Left colon (tissue), 2 donors: ENCODE measurements at regions of chr12 and their contacts with region 1.

Region 1: DNA sequence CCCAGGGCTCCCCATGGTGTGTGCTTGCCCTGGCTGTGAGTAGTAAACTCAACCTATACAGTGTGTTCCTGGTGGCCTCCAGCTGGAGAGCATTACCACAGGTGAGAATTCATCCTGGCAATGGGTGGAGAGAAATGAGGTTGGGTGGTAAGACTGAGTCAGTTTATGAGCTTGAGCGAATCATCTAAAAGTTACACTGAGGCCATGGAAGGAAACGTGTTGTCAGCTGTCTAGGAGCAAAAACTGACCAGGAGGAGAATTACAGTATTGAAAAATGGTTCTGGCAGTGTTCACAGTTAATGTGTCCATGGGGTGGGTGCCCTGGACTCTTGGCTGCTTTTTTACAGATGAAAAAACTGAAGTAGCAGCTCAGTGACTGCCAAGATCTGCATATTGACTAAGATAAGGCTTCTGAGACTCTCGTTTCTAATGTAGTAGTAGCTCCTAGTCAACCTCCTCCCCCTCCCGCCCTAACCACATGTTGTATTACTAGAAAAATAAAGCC is 202.0 kb upstream of the AMIGO2 start:
- DNase-seq: no peak
- ATAC-seq: no peak

Region 2: DNA sequence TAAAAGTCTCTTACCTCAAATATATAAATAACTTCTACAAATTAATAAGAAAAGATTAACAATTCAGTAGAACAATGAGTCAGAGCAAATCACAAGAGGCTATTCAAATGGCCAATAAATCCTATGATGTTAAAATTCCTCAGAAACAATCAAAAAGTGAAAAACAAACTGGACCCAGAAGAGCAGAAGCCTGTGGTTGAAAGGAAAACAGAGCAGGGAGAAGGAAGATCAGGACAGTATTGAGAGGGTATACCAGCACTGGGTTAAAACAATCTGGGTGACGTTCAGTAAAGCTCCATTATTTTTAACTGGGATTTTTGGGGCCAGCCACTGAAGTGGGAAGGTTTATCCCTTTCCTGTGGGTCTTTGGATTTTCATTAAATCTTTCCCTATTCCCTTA is 242.0 kb before region 1 on chr12:
- intact Hi-C with region 1: loop called in 1 of 2 experiments (anchors 10 kb)
- DNase-seq: no peak
- ATAC-seq: no peak

Region 3: DNA sequence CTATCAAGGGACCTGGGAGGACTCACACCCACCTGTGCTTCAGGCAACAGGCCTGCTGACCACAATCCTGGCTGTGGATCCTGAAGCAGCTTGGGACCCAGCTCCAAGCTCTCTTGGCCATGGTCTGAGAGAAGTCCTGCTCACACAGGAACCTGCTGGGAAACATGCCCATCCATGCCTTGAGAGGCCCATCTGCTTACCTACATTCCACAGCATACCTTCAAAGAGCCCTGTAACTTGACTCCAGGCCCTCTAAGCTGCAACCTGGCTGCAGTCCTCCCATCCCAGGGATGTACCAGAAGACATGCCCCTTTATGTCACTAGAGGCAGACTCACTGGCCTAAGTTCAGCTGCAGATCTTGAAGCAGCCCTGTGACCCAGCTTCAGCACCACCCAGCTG is 140.3 kb before region 1 on chr12:
- intact Hi-C with region 1: no loop called
- DNase-seq: no peak
- ATAC-seq: no peak

Region 4: DNA sequence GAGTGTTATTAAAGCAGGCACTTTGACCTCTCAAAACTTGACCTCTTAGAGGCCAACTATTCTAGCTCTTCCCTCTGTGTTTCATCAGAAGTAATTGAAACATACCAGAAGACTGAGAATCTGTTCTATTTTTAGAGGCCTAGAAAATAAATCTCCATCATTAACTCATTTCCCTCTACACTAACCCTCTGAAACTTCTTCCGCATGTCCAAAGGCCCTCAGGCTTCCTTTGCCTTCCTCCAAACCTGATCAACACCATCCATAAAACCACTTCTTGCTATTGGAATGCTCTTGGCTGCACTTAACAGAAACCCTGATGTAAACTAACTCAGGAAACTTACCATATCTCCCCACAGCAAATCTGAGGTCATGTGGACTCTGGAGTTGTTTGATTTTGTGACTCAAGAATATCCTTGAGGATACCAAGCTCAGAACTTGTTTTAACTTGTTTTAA is 227.7 kb after region 1 on chr12:
- intact Hi-C with region 1: no loop called
- DNase-seq: no peak
- ATAC-seq: no peak